Mammary epithelial cell (primary cell): ENCODE measurements at regions of chr6 and their contacts with region 1.

Region 1: GRCh38 chr6:141562851-141563763 is 569.6 kb upstream of the GJE1 start:
- DNase-seq: peak; percentile 57
- H3K4me3 ChIP-seq: no peak overlapping the region
- H3K27ac ChIP-seq: no peak overlapping the region
- H3K4me1 ChIP-seq: peaks cover 4% of the 10 kb centered on the region
- H3K27me3 ChIP-seq: no peaks in the 10 kb centered on the region
- CTCF ChIP-seq: peak; percentile 78 to 85

Region 2: DNA sequence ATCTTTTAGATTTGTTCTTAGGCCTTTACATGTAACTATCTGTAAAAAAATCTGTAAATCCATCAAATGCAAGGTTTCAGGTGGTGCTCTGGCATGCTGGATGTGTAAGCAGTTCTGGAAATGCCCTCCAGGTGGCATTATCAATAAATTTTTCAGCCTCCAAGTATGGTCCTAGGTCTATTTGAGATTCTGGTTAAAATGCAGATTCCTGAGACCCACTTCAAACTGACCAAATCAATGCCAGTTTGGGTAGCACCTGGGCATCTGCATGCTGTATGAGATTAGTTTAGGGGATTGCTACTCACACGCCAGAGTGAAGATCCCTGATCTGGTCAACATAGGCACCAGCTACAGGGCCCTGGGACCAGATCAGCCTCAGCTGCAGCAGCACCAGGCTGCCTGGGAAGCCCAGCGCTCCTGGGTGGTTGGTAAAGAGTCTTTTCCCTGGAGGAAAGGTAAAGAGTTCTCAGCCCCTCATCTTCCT is 1681.3 kb before region 1 on chr6:
- CTCF ChIA-PET with region 1: no interaction called
- dilution Hi-C with region 1: no loop called
- in situ Hi-C with region 1: no loop called
- intact Hi-C with region 1: loop called (anchors 5 kb)
- DNase-seq: peak; percentile 30
- H3K4me3 ChIP-seq: no peak overlapping the region
- H3K27ac ChIP-seq: no peak overlapping the region
- H3K4me1 ChIP-seq: peaks cover 9% of the 10 kb centered on the region
- H3K27me3 ChIP-seq: no peaks in the 10 kb centered on the region
- CTCF ChIP-seq: peak; percentile 70 to 73

Region 3: GRCh38 chr6:140271759-140272377 is 1291.2 kb before region 1 on chr6:
- CTCF ChIA-PET with region 1: interaction called, 15 read pairs
- dilution Hi-C with region 1: no loop called
- in situ Hi-C with region 1: no loop called
- intact Hi-C with region 1: no loop called
- DNase-seq: no peak
- H3K4me3 ChIP-seq: no peak overlapping the region
- H3K27ac ChIP-seq: no peak overlapping the region
- H3K4me1 ChIP-seq: peaks cover 6% of the 10 kb centered on the region
- H3K27me3 ChIP-seq: no peaks in the 10 kb centered on the region
- CTCF ChIP-seq: no peak

Region 4: GRCh38 chr6:140441256-140441655 is 1121.9 kb before region 1 on chr6:
- CTCF ChIA-PET with region 1: no interaction called
- dilution Hi-C with region 1: no loop called
- in situ Hi-C with region 1: no loop called
- intact Hi-C with region 1: loop called (anchors 5 kb)
- DNase-seq: peak; percentile 28
- H3K4me3 ChIP-seq: no peak overlapping the region
- H3K27ac ChIP-seq: no peak overlapping the region
- H3K4me1 ChIP-seq: peaks cover 18% of the 10 kb centered on the region
- H3K27me3 ChIP-seq: no peaks in the 10 kb centered on the region
- CTCF ChIP-seq: peak; percentile 43 to 78

Region 5: GRCh38 chr6:140921366-140922226 is 641.5 kb before region 1 on chr6:
- CTCF ChIA-PET with region 1: no interaction called
- dilution Hi-C with region 1: no loop called
- in situ Hi-C with region 1: no loop called
- intact Hi-C with region 1: loop called (anchors 5 kb)
- DNase-seq: peak; percentile 89
- H3K4me3 ChIP-seq: no peak overlapping the region
- H3K27ac ChIP-seq: no peak overlapping the region
- H3K4me1 ChIP-seq: no peaks in the 10 kb centered on the region
- H3K27me3 ChIP-seq: no peaks in the 10 kb centered on the region
- CTCF ChIP-seq: peak; percentile 85 to 86

Region 6: DNA sequence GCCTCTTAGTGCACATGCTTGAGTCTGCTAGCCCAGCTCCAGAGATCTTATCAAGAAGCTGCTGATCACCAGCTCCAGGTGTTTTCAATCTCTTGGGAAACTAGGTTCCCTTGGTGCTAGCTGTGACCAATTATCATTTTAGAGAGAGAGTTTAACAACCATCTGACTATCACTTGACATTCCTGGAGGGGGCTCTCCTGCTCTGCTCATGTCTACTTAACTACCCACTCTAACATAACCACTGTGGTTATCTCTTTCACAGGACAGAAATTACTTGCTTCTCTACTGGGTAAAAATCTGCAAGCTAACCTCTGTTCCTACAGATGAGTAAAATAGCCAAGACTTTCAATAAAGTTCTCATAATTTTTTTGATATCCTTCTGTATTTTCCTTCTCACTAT is 253.8 kb before region 1 on chr6:
- CTCF ChIA-PET with region 1: no interaction called
- dilution Hi-C with region 1: no loop called
- in situ Hi-C with region 1: loop called in 1 of 2 experiments (anchors 25 kb)
- intact Hi-C with region 1: loop called (anchors 1 kb)
- DNase-seq: no peak
- H3K4me3 ChIP-seq: no peak overlapping the region
- H3K27ac ChIP-seq: no peak overlapping the region
- H3K4me1 ChIP-seq: no peaks in the 10 kb centered on the region
- H3K27me3 ChIP-seq: no peaks in the 10 kb centered on the region
- CTCF ChIP-seq: peak in 1 of 2 donors; percentile 30

Region 7: DNA sequence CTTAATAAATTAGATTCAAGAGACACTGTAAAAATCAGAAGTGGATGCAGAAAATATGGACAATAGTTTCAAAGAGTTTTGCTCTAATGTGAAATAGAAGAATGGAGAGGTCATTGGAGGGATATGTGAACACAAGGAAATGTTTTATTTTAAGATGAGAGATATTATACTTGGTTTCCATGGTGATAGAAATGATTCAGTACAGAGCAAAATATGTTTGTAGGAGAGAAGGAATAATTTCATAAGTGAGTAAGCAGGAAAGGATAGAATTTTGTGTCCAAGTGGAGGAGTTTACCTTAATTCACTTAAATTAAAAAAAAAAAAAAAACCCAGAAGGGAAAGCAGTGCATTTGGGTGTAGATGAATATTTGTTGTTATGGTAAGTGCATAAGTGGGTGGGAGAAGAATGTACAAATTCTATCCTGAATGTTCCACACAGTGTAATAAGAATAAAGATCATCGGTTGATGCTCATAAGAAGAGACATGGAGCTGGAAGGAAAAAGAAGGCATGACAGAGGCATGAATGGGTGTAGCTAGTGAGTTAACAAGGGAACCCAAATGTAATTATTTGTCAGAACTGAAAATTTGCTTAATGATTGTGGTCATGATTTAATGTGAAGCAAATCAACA is 119.3 kb before region 1 on chr6:
- CTCF ChIA-PET with region 1: no interaction called
- dilution Hi-C with region 1: no loop called
- in situ Hi-C with region 1: no loop called
- intact Hi-C with region 1: no loop called
- DNase-seq: no peak
- H3K4me3 ChIP-seq: no peak overlapping the region
- H3K27ac ChIP-seq: no peak overlapping the region
- H3K4me1 ChIP-seq: no peaks in the 10 kb centered on the region
- H3K27me3 ChIP-seq: no peaks in the 10 kb centered on the region
- CTCF ChIP-seq: no peak

Region 8: DNA sequence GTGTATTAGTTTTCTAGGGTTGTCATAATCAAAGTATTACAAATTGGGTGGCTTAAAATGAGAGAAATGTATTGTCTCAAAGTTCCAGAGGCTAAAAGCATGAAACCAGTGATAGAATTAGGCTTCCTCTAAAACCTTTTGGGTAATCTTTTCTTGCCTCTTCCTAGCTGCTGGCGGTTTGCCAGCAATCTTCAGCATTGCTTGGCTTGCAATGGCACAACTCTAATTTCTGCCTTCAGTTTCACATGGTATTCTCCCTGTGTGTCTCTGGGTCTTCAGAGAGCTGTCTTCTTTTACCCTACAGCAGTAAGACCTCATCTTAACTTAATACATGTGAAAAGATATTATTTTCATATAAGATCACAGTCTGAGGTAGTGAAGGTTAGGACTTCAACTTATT is 90.5 kb after region 1 on chr6:
- CTCF ChIA-PET with region 1: interaction called, 11 read pairs
- dilution Hi-C with region 1: no loop called
- in situ Hi-C with region 1: no loop called
- intact Hi-C with region 1: no loop called
- DNase-seq: no peak
- H3K4me3 ChIP-seq: no peak overlapping the region
- H3K27ac ChIP-seq: no peak overlapping the region
- H3K4me1 ChIP-seq: no peaks in the 10 kb centered on the region
- H3K27me3 ChIP-seq: peaks cover 3% of the 10 kb centered on the region
- CTCF ChIP-seq: no peak